Adrenal gland (tissue), 19 donors: ENCODE measurements at regions of chr7 and their contacts with region 1.

Region 1: GRCh38 chr7:46352004-46352954 is 431.2 kb upstream of the IGFBP3 start:
- DNase-seq: peak in 6 of 7 donors; percentile 19 to 59 (median 32)
- H3K4me3 ChIP-seq: no peak overlapping the region
- H3K27ac ChIP-seq: no peak overlapping the region
- H3K4me1 ChIP-seq: no peaks in the 10 kb centered on the region
- H3K27me3 ChIP-seq: no peaks in the 10 kb centered on the region
- CTCF ChIP-seq: peak; percentile 17 to 73 (median 62)
- POLR2A ChIP-seq: no peak

Region 2: DNA sequence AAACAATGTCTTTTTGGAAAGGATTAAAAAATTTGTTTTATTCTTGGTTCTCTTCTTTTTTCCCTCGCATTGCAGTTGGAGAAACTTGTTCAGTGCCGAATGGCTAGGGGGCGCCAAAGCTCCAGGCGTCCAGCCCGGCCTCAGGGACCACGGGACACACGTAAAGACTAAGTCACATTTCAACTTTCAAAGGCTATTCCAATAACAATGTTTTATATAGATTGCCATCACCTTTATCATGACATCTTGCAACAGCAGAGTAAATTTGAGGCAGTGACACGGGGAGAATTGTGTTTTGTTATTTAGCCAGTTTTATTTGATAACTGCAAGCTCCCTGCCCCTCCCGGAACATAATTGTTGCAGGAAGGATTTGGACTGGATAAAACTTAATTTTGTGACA is 429.0 kb before region 1 on chr7:
- intact Hi-C with region 1: loop called (anchors 5 kb)
- DNase-seq: peak; percentile 66 to 85 (median 70)
- H3K4me3 ChIP-seq: peak overlapping the region in 1 of 4 donors; percentile 25
- H3K27ac ChIP-seq: no peak overlapping the region
- H3K4me1 ChIP-seq: peaks cover 0 to 4% of the 10 kb centered on the region in 2 donors
- H3K27me3 ChIP-seq: peaks cover 43% of the 10 kb centered on the region
- CTCF ChIP-seq: peak; percentile 74 to 92 (median 76)
- POLR2A ChIP-seq: no peak